OCI-LY7 (cell line): ENCODE measurements at regions of chr1 and their contacts with region 1.

Region 1: GRCh38 chr1:176559878-176560277 is 96.9 kb downstream of the PAPPA2 start:
- DNase-seq: peak; percentile 60
- H3K4me3 ChIP-seq: no peak overlapping the region
- H3K27ac ChIP-seq: no peak overlapping the region
- H3K4me1 ChIP-seq: no peaks in the 10 kb centered on the region
- CTCF ChIP-seq: peak; percentile 95

Region 2: GRCh38 chr1:176517484-176517883 is 42.4 kb before region 1 on chr1:
- CTCF ChIA-PET with region 1: no interaction called
- POLR2A ChIA-PET with region 1: no interaction called
- intact Hi-C with region 1: no loop called
- DNase-seq: no peak
- H3K4me3 ChIP-seq: no peak overlapping the region
- H3K27ac ChIP-seq: no peak overlapping the region
- H3K4me1 ChIP-seq: no peaks in the 10 kb centered on the region
- CTCF ChIP-seq: no peak

Region 3: GRCh38 chr1:176691251-176692228 is 131.7 kb after region 1 on chr1:
- CTCF ChIA-PET with region 1: no interaction called
- POLR2A ChIA-PET with region 1: no interaction called
- intact Hi-C with region 1: loop called (anchors 1 kb)
- DNase-seq: peak; percentile 65
- H3K4me3 ChIP-seq: no peak overlapping the region
- H3K27ac ChIP-seq: no peak overlapping the region
- H3K4me1 ChIP-seq: no peaks in the 10 kb centered on the region
- CTCF ChIP-seq: peak; percentile 86

Region 4: DNA sequence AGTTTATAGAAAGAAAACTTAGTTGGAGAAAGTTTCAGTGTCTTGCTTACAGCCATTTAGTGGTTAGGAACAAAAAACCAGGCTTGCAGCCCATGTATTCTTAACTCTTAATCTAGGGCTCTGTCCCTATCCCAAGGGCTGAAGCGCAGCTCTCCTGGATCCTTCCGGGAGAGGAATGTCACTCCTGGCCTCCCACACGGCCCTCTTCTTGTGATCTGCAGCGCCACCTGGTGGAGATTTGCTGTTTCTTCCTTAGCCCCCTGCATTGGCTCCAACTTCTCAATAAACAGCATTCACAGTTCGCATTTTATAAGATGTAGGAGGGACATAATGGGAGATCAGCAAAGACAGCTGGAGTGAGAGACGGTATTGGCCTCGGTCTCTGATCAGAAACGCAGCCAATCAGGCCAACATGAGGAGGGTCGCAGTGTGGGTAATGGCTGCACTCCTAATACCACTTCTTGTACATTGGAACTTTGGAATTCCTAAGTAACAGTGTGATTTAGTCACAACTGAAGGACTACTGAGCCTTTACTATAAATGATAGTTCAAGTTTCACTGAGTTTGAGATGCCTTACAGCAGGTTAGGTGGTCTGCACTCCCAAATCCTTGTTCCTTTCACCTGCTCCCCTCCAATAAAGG is 321.2 kb after region 1 on chr1:
- CTCF ChIA-PET with region 1: interaction called, 3 read pairs
- POLR2A ChIA-PET with region 1: no interaction called
- intact Hi-C with region 1: loop called (anchors 1 kb)
- DNase-seq: peak; percentile 58
- H3K4me3 ChIP-seq: no peak overlapping the region
- H3K27ac ChIP-seq: no peak overlapping the region
- H3K4me1 ChIP-seq: no peaks in the 10 kb centered on the region
- CTCF ChIP-seq: peak; percentile 92